ENCODE measurements at regions of chr13 and their contacts with region 1.

Region 1: DNA sequence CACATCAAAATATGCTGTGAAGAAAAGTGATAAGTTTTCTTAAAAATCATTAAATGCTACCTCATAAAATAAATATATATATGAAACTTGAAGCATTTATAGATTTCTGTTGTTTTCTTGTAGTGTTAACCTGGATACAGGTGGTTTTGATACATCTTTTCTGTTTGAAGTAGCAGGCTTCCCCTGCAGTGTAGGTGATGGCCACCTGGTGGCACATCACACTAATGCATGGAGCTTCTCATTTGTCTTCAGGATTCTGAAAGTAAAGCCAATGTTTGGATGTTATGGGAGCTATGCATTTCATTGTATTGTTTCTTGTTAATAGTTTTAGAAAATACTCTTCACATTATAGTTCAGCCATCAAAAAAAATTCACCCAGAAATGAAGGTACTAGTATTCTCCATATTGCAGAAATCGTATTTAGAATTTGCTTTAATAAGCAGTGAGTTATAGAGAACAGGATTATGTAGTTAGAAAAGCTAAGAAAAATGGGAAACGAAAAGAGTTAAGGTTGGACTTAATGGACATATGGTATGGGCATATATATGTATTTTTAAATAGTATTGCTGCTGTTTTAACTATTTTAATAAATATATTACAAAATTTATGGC is 18.7 kb downstream of the GPR180 start:
- DNase-seq: no peak
- ATAC-seq: peak; percentile 90
- H3K4me3 ChIP-seq: no peak overlapping the region
- H3K27ac ChIP-seq: no peak overlapping the region
- H3K4me1 ChIP-seq: no peaks in the 10 kb centered on the region
- H3K27me3 ChIP-seq: no peaks in the 10 kb centered on the region
- CTCF ChIP-seq: peak; percentile 73 to 79 (median 73)
- EP300 ChIP-seq: no peak
- POLR2A ChIP-seq: no peak
- RAD21 ChIP-seq: peak; percentile 79

Region 2: GRCh38 chr13:94362411-94362909 is 257.9 kb before region 1 on chr13:
- CTCF ChIA-PET with region 1: interaction called, 11 read pairs
- POLR2A ChIA-PET with region 1: no interaction called
- RAD21 ChIA-PET with region 1: interaction called, 9 read pairs
- SMC1A ChIA-PET with region 1: interaction called, 3 read pairs
- in situ Hi-C with region 1: no loop called
- intact Hi-C with region 1: loop called (anchors 1 kb)
- DNase-seq: peak; percentile 36
- ATAC-seq: peak; percentile 100
- H3K4me3 ChIP-seq: no peak overlapping the region
- H3K27ac ChIP-seq: no peak overlapping the region
- H3K4me1 ChIP-seq: no peaks in the 10 kb centered on the region
- H3K27me3 ChIP-seq: 0 out of 4 replicates have a peak, but pooled peaks cover 0 to 3% of the 10 kb centered on the region in 2 experiments
- CTCF ChIP-seq: peak; percentile 69 to 84 (median 82)
- EP300 ChIP-seq: no peak
- POLR2A ChIP-seq: no peak
- RAD21 ChIP-seq: peak; percentile 96

Region 3: GRCh38 chr13:94549232-94550061 is 70.9 kb before region 1 on chr13:
- CTCF ChIA-PET with region 1: interaction called, 21 read pairs
- POLR2A ChIA-PET with region 1: interaction called, 3 read pairs
- RAD21 ChIA-PET with region 1: interaction called, 34 read pairs
- SMC1A ChIA-PET with region 1: interaction called, 10 read pairs
- in situ Hi-C with region 1: no loop called
- intact Hi-C with region 1: no loop called
- DNase-seq: peak; percentile 93
- ATAC-seq: peak; percentile 96
- H3K4me3 ChIP-seq: peak overlapping the region; percentile 83
- H3K27ac ChIP-seq: peak overlapping the region; percentile 92
- H3K4me1 ChIP-seq: no peaks in the 10 kb centered on the region
- H3K27me3 ChIP-seq: no peaks in the 10 kb centered on the region
- CTCF ChIP-seq: no peak; a peak in 1 of 6 replicates
- EP300 ChIP-seq: no peak
- POLR2A ChIP-seq: peak; percentile 90
- RAD21 ChIP-seq: no peak

Region 4: GRCh38 chr13:94601446-94602431 is 18.7 kb before region 1 on chr13 and contains the start of gene GPR180:
- CTCF ChIA-PET with region 1: interaction called, 102 read pairs
- POLR2A ChIA-PET with region 1: interaction called, 6 read pairs
- RAD21 ChIA-PET with region 1: interaction called, 36 read pairs
- SMC1A ChIA-PET with region 1: interaction called, 25 read pairs
- in situ Hi-C with region 1: no loop called
- intact Hi-C with region 1: no loop called
- DNase-seq: peak; percentile 95
- ATAC-seq: peak; percentile 99
- H3K4me3 ChIP-seq: peak within 1 kb of the TSS; percentile 90
- H3K27ac ChIP-seq: peak within 1 kb of the TSS; percentile 80
- H3K4me1 ChIP-seq: peaks cover 6% of the 10 kb centered on the region; the same call in 1 of the 2 replicates
- H3K27me3 ChIP-seq: no peaks in the 10 kb centered on the region
- CTCF ChIP-seq: no peak
- EP300 ChIP-seq: no peak
- POLR2A ChIP-seq: peak; percentile 90
- RAD21 ChIP-seq: no peak
- polyA plus RNA-seq, gene GPR180: 1.6 to 1.8 TPM

Region 5: DNA sequence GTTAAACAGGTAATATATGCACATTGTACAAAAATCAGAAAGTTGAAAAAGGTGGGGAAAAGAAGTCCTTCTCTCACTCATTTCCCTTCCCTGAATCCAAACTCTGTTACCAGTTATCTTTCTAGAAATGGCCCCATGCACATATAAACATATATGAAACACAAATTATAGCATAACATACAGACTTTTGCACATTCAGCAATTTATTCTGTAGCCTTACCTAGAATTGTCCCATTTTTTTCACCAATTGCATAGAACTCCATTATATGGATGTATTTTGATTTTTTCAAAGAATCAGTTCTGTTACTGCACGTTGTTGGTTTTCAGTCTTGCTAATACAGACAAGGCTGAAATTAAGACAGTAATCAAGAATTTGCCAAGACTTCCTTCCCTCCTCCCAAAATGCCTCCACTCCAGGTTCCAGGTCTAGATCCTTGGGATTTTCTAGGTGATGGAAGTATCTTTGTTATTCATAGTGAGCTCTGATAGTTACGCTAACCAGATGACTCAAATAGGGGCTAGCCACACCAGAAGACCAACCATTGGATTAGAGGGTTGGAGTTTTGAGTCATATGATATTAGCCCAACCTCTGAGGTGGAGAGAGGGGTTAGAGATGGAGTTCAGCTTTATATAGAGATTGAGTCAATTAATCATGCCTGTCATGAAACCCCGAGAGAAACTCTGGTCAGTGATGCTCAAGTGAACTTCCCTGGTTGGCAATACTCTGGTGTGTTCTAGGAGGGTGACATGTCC is 12.0 kb after region 1 on chr13:
- CTCF ChIA-PET with region 1: interaction called, 56 read pairs
- POLR2A ChIA-PET with region 1: no interaction called
- RAD21 ChIA-PET with region 1: interaction called, 4 read pairs
- SMC1A ChIA-PET with region 1: interaction called, 20 read pairs
- in situ Hi-C with region 1: no loop called
- intact Hi-C with region 1: no loop called
- DNase-seq: no peak
- ATAC-seq: no peak
- H3K4me3 ChIP-seq: no peak overlapping the region
- H3K27ac ChIP-seq: no peak overlapping the region
- H3K4me1 ChIP-seq: no peaks in the 10 kb centered on the region
- H3K27me3 ChIP-seq: no peaks in the 10 kb centered on the region
- CTCF ChIP-seq: no peak
- EP300 ChIP-seq: no peak
- POLR2A ChIP-seq: no peak
- RAD21 ChIP-seq: no peak

Region 6: GRCh38 chr13:94849254-94849653 is 228.9 kb after region 1 on chr13:
- CTCF ChIA-PET with region 1: no interaction called
- POLR2A ChIA-PET with region 1: no interaction called
- RAD21 ChIA-PET with region 1: no interaction called
- SMC1A ChIA-PET with region 1: no interaction called
- in situ Hi-C with region 1: no loop called
- intact Hi-C with region 1: no loop called
- DNase-seq: no peak
- ATAC-seq: no peak
- H3K4me3 ChIP-seq: no peak overlapping the region
- H3K27ac ChIP-seq: no peak overlapping the region
- H3K4me1 ChIP-seq: no peaks in the 10 kb centered on the region
- H3K27me3 ChIP-seq: no peaks in the 10 kb centered on the region
- CTCF ChIP-seq: no peak
- EP300 ChIP-seq: no peak
- POLR2A ChIP-seq: no peak
- RAD21 ChIP-seq: no peak

Region 7: GRCh38 chr13:96229356-96229755 is 1609.0 kb after region 1 on chr13:
- CTCF ChIA-PET with region 1: no interaction called
- POLR2A ChIA-PET with region 1: no interaction called
- RAD21 ChIA-PET with region 1: no interaction called
- SMC1A ChIA-PET with region 1: no interaction called
- in situ Hi-C with region 1: no loop called
- intact Hi-C with region 1: no loop called
- DNase-seq: no peak
- ATAC-seq: peak; percentile 83
- H3K4me3 ChIP-seq: no peak overlapping the region
- H3K27ac ChIP-seq: no peak overlapping the region
- H3K4me1 ChIP-seq: no peaks in the 10 kb centered on the region
- H3K27me3 ChIP-seq: no peaks in the 10 kb centered on the region
- CTCF ChIP-seq: peak; percentile 51 to 55 (median 54)
- EP300 ChIP-seq: no peak
- POLR2A ChIP-seq: no peak
- RAD21 ChIP-seq: peak; percentile 38